ENCODE measurements at regions of chr12 and their contacts with region 1.

Region 1: GRCh38 chr12:27534060-27534764 is 10.2 kb downstream of the PPFIBP1 start:
- DNase-seq: peak; percentile 16
- H3K4me3 Mint-ChIP-seq: peak overlapping the region; percentile 40
- H3K27ac Mint-ChIP-seq: peak overlapping the region; percentile 66
- H3K4me1 Mint-ChIP-seq: peaks cover 77% of the 10 kb centered on the region
- H3K27me3 Mint-ChIP-seq: peaks cover 4% of the 10 kb centered on the region

Region 2: GRCh38 chr12:26937875-26938700 is 596.1 kb before region 1 on chr12 and contains the starts of genes FGFR1OP2 and INTS13:
- intact Hi-C with region 1: loop called (anchors 10 kb)
- DNase-seq: peak; percentile 97
- H3K4me3 Mint-ChIP-seq: peak within 1 kb of the TSS; percentile 96
- H3K27ac Mint-ChIP-seq: peak within 1 kb of the TSS; percentile 96
- H3K4me1 Mint-ChIP-seq: peaks cover 82% of the 10 kb centered on the region
- H3K27me3 Mint-ChIP-seq: no peaks in the 10 kb centered on the region
- total RNA-seq, gene FGFR1OP2: 48.3 and 49.9 TPM in 2 replicates
- total RNA-seq, gene INTS13: 43.8 and 52.2 TPM in 2 replicates

Region 3: DNA sequence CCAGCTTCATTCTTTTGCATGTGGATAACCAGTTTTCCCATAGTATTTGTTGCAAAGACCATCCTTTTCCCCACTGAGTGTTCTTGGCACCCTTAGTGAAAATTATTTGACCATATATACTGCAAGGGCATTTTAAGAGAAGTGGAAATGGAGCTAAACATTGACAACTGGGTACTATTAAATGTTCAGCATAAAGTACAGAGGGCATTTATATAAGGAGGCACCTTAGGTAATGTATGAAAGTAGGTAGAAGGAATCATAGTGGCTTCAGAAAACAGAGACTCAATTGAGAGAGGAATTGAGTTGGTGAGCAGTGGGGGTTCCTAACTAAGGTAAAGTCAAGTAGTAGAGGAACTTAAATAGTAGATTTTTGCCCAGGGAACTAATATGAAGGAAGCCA is 122.2 kb before region 1 on chr12:
- intact Hi-C with region 1: no loop called
- DNase-seq: no peak
- H3K4me3 Mint-ChIP-seq: no peak overlapping the region
- H3K27ac Mint-ChIP-seq: no peak overlapping the region
- H3K4me1 Mint-ChIP-seq: peaks cover 8% of the 10 kb centered on the region
- H3K27me3 Mint-ChIP-seq: no peaks in the 10 kb centered on the region

Region 4: GRCh38 chr12:27498149-27498548 is 36.1 kb before region 1 on chr12:
- intact Hi-C with region 1: loop called (anchors 1 kb)
- DNase-seq: peak; percentile 16
- H3K4me3 Mint-ChIP-seq: peak overlapping the region; percentile 3
- H3K27ac Mint-ChIP-seq: peak overlapping the region; percentile 76
- H3K4me1 Mint-ChIP-seq: peaks cover 53% of the 10 kb centered on the region
- H3K27me3 Mint-ChIP-seq: no peaks in the 10 kb centered on the region

Region 5: GRCh38 chr12:27549801-27550652 is 15.8 kb after region 1 on chr12:
- intact Hi-C with region 1: loop called (anchors 2 kb)
- DNase-seq: no peak
- H3K4me3 Mint-ChIP-seq: no peak overlapping the region
- H3K27ac Mint-ChIP-seq: no peak overlapping the region
- H3K4me1 Mint-ChIP-seq: peaks cover 48% of the 10 kb centered on the region
- H3K27me3 Mint-ChIP-seq: peaks cover 6% of the 10 kb centered on the region

Region 6: DNA sequence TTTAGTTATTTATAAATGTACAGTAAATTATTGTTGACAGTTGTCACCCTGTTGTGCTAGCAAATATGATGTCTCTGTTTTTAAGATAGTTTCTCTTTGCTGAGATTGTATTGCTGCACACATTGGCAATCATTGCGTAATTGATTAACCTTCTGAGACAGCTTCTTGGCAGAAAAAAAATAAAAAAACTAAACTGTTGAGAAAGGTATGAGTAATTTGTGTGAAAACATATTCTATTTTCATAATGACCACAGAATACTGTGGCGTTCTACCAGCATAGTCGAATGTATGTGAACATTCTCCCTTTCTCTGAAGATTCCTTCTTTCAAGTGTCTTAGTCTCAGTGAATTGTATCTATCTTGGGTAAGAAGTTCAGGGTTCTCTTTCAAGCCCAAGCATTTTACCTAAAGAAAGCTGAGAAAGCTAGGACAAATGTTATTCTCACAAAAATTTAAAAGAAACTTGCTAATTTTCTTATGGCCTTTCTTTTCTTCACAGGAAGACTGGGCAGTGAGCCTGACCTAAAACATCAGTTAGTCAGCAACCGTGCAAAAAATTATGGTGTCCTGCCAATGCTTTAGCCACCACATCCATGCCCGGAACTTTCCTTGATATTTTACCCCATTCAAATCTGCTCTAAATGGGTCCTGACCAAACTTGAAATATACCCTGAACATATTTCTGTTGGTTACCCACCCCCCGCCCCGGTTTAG is 93.1 kb after region 1 on chr12:
- intact Hi-C with region 1: loop called (anchors 5 kb)
- DNase-seq: no peak
- H3K4me3 Mint-ChIP-seq: no peak overlapping the region
- H3K27ac Mint-ChIP-seq: no peak overlapping the region
- H3K4me1 Mint-ChIP-seq: peaks cover 41% of the 10 kb centered on the region
- H3K27me3 Mint-ChIP-seq: no peaks in the 10 kb centered on the region